ENCODE measurements at regions of chr17 and their contacts with region 1.

Region 1: DNA sequence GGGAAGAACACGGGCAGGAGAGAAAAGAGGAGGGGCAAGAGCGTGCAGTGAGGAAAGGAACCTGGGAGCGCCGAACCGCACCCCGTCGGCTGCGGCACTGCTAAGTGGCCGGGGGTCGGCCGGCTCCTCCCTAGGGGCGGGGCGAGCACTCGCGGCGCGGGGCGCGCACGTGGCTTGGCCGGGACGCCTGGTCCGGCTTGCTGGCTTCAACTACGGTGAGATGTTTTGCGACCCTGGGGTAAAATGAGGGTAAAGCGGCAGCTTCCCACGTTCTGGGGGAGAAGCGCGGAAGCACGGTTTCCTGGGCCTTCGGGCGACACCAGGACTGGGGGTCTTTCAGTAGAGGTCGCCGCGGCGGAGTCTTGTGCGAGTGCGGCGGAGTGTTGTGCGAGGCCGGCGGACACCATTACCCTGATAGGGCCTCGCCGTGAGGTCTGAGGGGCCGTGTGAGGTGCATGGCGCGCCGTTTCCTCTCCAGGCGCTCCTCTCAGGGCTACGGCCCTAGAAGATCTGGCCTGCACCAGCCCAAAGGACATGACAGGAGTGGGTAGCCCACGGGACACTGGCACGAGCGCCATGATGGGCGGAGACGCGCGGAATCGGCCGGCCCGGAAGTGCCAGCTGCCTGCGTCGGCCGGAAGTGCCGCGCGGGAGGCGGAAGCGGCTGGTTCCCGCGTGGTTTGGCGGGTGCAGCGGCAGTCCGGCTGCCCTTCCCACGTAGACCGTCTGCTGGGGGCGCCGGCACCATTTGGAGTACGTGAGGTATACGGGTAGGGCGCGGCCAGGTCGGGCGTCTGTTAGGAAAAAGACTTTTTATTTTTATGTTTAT is at the starts of genes MYO19 and PIGW:
- DNase-seq: peak; percentile 63
- H3K4me3 ChIP-seq: peak within 1 kb of the TSS; percentile 93
- H3K27ac ChIP-seq: peak within 1 kb of the TSS; percentile 94
- H3K27me3 ChIP-seq: no peaks in the 10 kb centered on the region
- CTCF ChIP-seq: no peak
- polyA plus RNA-seq, gene MYO19: 23.1 and 28.9 TPM in 2 replicates
- polyA plus RNA-seq, gene PIGW: 4.5 and 4.7 TPM in 2 replicates

Region 2: DNA sequence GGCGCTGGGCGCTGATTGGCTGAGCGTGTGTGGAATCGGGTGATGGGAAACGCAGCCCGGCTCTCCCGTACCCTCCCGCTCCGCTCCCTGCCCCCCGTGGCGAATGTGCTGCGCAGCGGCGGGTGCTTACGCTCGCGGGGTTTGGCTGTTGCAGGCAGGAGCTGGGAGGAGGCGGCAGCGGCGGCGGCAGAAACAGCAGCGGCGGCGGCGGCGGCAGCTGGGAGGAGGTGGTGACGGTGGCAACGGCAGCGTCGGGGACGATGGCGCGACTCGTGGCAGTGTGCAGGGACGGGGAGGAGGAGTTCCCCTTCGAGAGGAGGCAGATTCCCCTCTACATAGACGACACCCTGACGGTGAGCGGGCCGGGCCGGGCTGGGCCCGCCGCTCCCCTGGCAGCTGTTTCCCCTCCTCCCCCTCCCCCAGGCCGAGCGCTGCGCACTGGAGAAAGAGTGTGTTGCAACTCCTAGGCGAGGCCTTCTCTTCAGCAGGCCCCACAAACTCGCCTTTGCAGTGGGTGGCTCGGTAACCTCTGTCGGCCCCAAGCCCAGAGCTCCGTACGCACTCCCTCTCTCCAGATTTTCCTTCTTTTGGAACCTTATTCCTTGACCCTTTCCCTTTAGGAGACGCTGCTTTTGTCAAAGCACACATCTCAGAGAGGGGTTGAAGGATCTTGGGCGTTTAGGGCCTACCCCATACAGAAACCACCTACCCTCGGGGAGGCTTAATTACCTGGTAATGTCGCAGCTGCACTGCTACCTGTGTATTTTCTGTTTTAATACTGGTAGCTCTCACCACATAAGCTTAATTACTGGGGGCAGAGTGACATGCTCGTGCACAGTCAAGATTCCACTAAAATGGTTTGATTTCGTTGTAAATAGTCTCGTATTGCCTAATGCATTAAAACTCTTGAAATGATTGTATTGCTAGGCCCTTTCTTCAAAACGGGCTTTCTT is 10.7 kb after region 1 on chr17:
- CTCF ChIA-PET with region 1: no interaction called
- POLR2A ChIA-PET with region 1: interaction called, 40 read pairs
- DNase-seq: peak; percentile 95
- H3K4me3 ChIP-seq: peak overlapping the region; percentile 92
- H3K27ac ChIP-seq: peak overlapping the region; percentile 94
- H3K27me3 ChIP-seq: no peaks in the 10 kb centered on the region
- CTCF ChIP-seq: 0 out of 2 replicates have a peak, but pooled peaks have one; percentile 9